Activated CD4-positive, alpha-beta T cell treated with anti-CD3 and anti-CD28 coated beads for 36 hours (primary cell): ENCODE measurements at regions of chr5 and their contacts with region 1.

Region 1: DNA sequence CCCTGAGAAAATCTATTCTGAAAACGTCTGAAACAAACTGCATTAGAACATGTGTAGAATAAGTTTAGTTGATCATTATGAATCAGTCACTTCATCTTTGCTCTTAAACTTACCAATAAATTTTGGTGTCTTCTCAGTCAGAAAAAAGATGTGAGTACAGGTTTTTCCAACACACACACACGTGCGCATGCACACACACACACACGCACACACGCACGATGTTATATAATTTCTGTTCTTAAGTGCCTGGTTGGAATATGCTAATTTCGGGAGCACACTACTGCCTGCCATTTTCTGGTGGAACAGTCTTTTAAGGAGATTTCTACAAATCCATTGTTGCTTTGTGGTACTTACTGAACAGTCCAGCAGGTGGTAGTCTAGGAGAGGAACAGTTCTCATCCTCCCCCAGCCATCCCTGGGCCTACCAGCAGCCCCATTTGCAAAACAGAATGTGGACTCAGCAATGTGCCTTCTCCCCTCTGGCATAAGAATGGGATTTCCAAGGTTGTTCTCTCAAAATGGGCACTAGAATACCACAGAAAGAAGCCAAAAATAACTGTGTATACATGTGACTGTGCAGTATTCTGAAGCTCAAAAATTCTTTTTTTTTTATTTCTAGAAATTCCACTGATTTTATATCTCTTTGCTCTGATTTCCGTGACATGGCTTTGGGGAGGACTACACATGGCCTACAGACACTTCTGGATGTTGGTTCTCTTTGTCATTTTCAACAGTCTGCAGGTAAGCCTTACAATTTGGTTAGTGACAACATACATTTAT is 281.3 kb downstream of the ARRDC3 start:
- DNase-seq: peak; percentile 76
- ATAC-seq: peak; percentile 89
- H3K4me3 Mint-ChIP-seq: no peak overlapping the region
- H3K27ac Mint-ChIP-seq: no peak overlapping the region
- H3K4me1 Mint-ChIP-seq: no peaks in the 10 kb centered on the region
- H3K27me3 Mint-ChIP-seq: peaks cover 13% of the 10 kb centered on the region

Region 2: DNA sequence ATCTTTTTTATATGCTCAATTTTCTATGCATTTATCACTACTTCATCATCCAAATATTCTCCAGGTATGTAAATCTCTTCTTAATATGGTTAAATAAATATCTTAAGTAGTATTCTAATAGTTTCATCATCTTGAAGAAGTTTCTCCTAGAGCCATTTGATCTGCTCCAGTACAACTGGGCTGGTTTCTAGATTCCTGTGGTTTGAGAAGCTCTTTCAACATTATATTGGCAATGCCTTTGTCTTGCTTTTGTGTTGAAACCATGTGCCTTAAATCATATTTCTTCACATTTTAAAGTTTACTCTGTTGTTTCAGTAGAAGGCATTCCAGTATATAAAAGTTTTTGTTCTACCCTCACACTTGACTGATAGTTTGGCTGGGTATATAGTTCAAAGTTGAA is 654.8 kb before region 1 on chr5:
- CTCF ChIA-PET with region 1: no interaction called
- POLR2A ChIA-PET with region 1: no interaction called
- intact Hi-C with region 1: no loop called
- DNase-seq: no peak
- ATAC-seq: no peak
- H3K4me3 Mint-ChIP-seq: no peak overlapping the region
- H3K27ac Mint-ChIP-seq: no peak overlapping the region
- H3K4me1 Mint-ChIP-seq: no peaks in the 10 kb centered on the region
- H3K27me3 Mint-ChIP-seq: no peaks in the 10 kb centered on the region

Region 3: GRCh38 chr5:90866333-90866732 is 235.5 kb before region 1 on chr5:
- CTCF ChIA-PET with region 1: no interaction called
- POLR2A ChIA-PET with region 1: no interaction called
- intact Hi-C with region 1: loop called (anchors 2 to 10 kb)
- DNase-seq: no peak
- ATAC-seq: no peak
- H3K4me3 Mint-ChIP-seq: no peak overlapping the region
- H3K27ac Mint-ChIP-seq: no peak overlapping the region
- H3K4me1 Mint-ChIP-seq: peaks cover 7% of the 10 kb centered on the region
- H3K27me3 Mint-ChIP-seq: peaks cover 15% of the 10 kb centered on the region

Region 4: GRCh38 chr5:91151947-91152346 is 50.2 kb after region 1 on chr5:
- CTCF ChIA-PET with region 1: no interaction called
- POLR2A ChIA-PET with region 1: no interaction called
- intact Hi-C with region 1: no loop called
- DNase-seq: no peak
- ATAC-seq: no peak
- H3K4me3 Mint-ChIP-seq: no peak overlapping the region
- H3K27ac Mint-ChIP-seq: no peak overlapping the region
- H3K4me1 Mint-ChIP-seq: peaks cover 4% of the 10 kb centered on the region
- H3K27me3 Mint-ChIP-seq: peaks cover 4% of the 10 kb centered on the region